CD8-positive, alpha-beta T cell (primary cell): ENCODE measurements at regions of chr4 and their contacts with region 1.

Region 1: DNA sequence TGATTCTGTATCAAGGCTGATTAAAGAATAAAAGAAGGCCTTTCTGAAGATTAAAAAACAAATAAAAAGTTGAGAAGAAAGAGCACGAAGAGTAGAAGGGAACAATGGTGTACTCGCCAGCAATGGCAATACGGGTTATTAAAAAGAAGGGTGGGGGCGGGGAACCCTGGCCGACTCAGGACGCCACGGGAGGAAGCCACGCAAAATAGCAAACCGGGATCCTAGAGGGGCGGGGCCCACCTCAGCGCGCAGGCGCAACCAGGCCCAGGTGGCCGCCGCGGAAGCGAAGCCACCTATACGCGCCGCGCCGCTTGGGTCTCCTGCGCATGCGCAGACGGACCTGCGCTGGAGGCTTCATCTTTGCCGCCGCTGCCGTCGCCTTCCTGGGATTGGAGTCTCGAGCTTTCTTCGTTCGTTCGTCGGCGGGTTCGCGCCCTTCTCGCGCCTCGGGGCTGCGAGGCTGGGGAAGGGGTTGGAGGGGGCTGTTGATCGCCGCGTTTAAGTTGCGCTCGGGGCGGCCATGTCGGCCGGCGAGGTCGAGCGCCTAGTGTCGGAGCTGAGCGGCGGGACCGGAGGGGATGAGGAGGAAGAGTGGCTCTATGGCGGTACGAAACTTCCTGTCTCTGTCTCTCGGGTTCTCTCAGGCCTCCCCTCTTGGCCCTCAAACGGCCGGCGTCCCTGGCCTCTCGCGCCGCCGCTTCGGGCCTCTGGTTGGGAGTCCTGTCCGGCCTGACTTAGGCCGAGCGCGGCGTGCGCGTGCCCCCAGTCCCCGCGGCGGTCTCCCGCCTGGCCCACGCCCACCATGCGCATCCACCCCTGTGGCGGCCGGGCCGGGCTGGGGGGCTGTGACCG is at the start of gene FIP1L1:
- DNase-seq: peak; percentile 90 to 98 (median 96)
- ATAC-seq: peak; percentile 92
- H3K4me3 ChIP-seq: peak within 1 kb of the TSS; percentile 68 to 96
- H3K4me3 Mint-ChIP-seq: peak within 1 kb of the TSS; percentile 100
- H3K27ac ChIP-seq: peak within 1 kb of the TSS; percentile 84 to 90
- H3K27ac Mint-ChIP-seq: peak within 1 kb of the TSS; percentile 99
- H3K4me1 ChIP-seq: peaks cover 26% of the 10 kb centered on the region
- H3K4me1 Mint-ChIP-seq: peaks cover 40% of the 10 kb centered on the region
- H3K27me3 ChIP-seq: peaks cover 0 to 2% of the 10 kb centered on the region in 2 experiments
- H3K27me3 Mint-ChIP-seq: peaks cover 2% of the 10 kb centered on the region
- CTCF ChIP-seq: no peak
- total RNA-seq, gene FIP1L1: 56.9 to 59.9 TPM

Region 2: DNA sequence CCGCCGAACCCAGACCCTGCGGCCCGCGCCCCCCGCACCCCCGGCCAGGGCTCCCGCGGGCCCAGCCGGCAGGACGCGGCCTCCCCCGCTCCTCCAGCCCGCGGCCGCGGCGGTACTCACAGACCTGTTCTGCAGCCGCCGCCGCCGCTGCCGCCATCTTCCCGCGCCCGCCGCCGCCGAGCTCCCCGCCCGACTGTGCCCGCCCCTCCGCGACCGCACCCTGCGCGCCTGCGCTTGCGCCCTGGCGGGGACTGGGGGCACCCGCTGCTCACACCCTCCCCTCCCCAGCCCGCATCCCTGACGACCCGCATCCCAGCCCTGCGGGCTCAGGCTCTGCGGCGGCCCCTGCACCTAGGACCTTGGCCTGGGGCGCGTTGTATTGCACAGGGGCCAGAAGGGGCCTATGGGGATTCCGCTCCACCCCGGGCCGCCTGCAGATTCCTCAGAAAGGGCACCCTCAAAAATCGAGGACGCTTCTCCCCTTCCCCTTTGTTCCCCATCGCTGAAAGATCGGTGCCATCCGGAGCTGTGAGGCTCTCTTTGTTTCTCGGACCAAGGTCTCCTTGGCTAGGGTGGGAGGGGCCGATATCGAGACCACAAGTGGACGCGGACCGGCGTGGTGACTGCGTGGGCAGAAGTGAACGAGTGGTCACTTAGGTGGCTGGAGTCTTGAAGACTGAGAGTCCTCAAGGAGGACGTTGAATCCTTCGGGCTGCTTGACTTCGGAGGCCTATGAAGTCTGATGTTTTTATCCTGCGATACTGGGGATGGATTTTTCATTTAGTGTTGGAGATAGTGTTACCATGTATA is 1339.2 kb before region 1 on chr4 and contains the start of gene SGCB:
- CTCF ChIA-PET with region 1: no interaction called
- POLR2A ChIA-PET with region 1: no interaction called
- intact Hi-C with region 1: loop called in 1 of 2 experiments (anchors 5 kb)
- DNase-seq: peak; percentile 29 to 83 (median 72)
- ATAC-seq: peak; percentile 94
- H3K4me3 ChIP-seq: peak within 1 kb of the TSS; percentile 67 to 74
- H3K4me3 Mint-ChIP-seq: peak within 1 kb of the TSS; percentile 85
- H3K27ac ChIP-seq: no peak within 1 kb of the TSS
- H3K27ac Mint-ChIP-seq: peak within 1 kb of the TSS; percentile 19
- H3K4me1 ChIP-seq: peaks cover 14% of the 10 kb centered on the region
- H3K4me1 Mint-ChIP-seq: peaks cover 26% of the 10 kb centered on the region
- H3K27me3 ChIP-seq: no peaks in the 10 kb centered on the region
- H3K27me3 Mint-ChIP-seq: peaks cover 11% of the 10 kb centered on the region
- CTCF ChIP-seq: no peak
- total RNA-seq, gene SGCB: 3.0 to 3.1 TPM

Region 3: GRCh38 chr4:52545099-52546069 is 832.2 kb before region 1 on chr4:
- CTCF ChIA-PET with region 1: no interaction called
- POLR2A ChIA-PET with region 1: no interaction called
- intact Hi-C with region 1: no loop called
- DNase-seq: peak; percentile 23 to 64 (median 55)
- ATAC-seq: peak; percentile 38
- H3K4me3 ChIP-seq: no peak overlapping the region
- H3K4me3 Mint-ChIP-seq: no peak overlapping the region
- H3K27ac ChIP-seq: no peak overlapping the region
- H3K27ac Mint-ChIP-seq: no peak overlapping the region
- H3K4me1 ChIP-seq: no peaks in the 10 kb centered on the region
- H3K4me1 Mint-ChIP-seq: no peaks in the 10 kb centered on the region
- H3K27me3 ChIP-seq: peaks cover 0 to 3% of the 10 kb centered on the region in 2 experiments
- H3K27me3 Mint-ChIP-seq: peaks cover 16% of the 10 kb centered on the region
- CTCF ChIP-seq: peak; percentile 62

Region 4: GRCh38 chr4:52712172-52712990 is 665.2 kb before region 1 on chr4:
- CTCF ChIA-PET with region 1: no interaction called
- POLR2A ChIA-PET with region 1: no interaction called
- intact Hi-C with region 1: loop called in 1 of 2 experiments (anchors 5 kb)
- DNase-seq: peak; percentile 90 to 97 (median 95)
- ATAC-seq: peak; percentile 89
- H3K4me3 ChIP-seq: peak overlapping the region; percentile 58 to 76
- H3K4me3 Mint-ChIP-seq: peak overlapping the region; percentile 92
- H3K27ac ChIP-seq: peak overlapping the region; percentile 82 to 89
- H3K27ac Mint-ChIP-seq: peak overlapping the region; percentile 96
- H3K4me1 ChIP-seq: peaks cover 29% of the 10 kb centered on the region
- H3K4me1 Mint-ChIP-seq: peaks cover 43% of the 10 kb centered on the region
- H3K27me3 ChIP-seq: no peaks in the 10 kb centered on the region
- H3K27me3 Mint-ChIP-seq: no peaks in the 10 kb centered on the region
- CTCF ChIP-seq: no peak

Region 5: DNA sequence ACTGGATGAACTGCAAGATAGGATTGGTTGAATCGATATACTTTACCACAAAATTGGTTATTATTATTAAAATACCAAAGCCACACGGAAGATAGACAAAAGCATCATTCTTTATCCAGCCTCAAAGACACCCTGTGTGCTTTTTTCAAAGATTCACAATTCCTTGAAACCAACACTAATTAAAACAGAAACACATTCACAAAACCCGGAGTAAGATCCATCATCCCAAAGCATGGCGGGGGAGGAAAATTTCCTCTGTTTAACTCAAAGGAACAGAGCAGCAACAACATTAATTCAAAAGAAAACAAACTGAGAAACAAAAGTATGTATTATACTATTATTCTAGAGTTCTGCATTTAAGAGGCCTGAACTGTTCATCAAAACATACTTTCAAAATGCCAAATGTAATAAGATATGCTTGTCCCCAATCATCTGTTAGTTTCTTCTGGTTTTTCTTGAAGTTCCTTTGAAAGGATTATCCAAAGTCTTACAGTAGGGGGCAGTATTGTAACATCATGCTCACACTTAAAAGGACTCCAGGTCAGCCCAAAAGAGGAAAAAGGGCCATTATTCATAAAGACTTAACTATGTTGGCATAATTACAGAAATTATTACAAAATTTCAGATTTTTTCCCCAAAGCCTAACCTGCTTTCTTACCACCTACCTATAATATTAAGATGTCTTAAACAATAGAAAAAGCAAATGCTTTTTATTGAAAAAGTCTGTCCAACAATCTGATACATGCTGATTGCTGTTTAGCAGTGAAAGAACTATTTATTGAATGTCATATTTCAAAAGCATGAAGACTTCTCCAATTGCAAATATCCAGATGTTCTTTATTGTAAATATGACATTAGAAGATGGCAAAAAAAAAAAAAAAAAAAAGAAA is 180.4 kb before region 1 on chr4:
- CTCF ChIA-PET with region 1: no interaction called
- POLR2A ChIA-PET with region 1: no interaction called
- intact Hi-C with region 1: loop called in 1 of 2 experiments (anchors 5 kb)
- DNase-seq: peak in 2 of 9 experiments; percentile 62 to 69
- ATAC-seq: no peak
- H3K4me3 ChIP-seq: no peak overlapping the region
- H3K4me3 Mint-ChIP-seq: no peak overlapping the region
- H3K27ac ChIP-seq: no peak overlapping the region
- H3K27ac Mint-ChIP-seq: no peak overlapping the region
- H3K4me1 ChIP-seq: no peaks in the 10 kb centered on the region
- H3K4me1 Mint-ChIP-seq: no peaks in the 10 kb centered on the region
- H3K27me3 ChIP-seq: no peaks in the 10 kb centered on the region
- H3K27me3 Mint-ChIP-seq: no peaks in the 10 kb centered on the region
- CTCF ChIP-seq: peak; percentile 79

Region 6: DNA sequence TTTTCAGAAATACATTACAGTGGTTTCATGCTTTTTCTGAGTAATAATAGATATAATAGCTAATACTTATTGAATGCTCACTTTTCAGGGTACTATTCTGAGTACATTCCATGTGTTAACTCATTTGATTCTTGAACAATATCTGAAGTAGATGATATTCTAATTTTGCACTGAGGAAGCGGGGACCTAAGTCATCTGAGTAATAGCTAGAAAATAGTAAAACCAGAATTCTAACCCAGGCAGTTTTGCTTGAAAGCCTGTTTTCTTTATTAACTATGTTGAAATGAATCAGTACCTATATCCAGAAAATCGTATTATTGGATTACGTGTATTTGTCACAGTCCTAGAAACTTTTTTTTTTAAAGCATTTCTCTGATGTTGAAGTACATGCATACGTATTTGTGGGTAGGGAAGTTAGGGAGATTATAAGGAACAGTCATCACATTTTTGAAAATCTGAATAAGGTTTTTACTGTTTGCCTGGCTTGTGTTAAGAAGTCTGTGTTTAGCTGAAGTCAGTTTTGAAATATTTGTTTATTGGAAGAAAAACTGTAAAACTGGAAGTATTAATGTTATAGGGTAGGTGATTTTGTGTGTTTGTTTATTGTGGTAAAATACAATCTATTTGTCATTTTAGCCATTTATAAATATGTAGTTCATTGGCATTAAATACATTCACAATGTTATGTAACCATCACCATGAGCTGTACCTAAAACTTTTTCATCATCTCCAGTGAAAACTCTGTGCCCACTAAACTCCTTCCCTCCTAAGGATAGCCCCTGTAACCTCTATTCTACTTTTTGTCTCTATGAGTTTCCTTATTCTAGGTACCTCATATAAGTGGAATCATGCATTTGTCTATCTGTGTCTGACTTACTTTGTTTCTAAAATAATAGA is 55.2 kb after region 1 on chr4:
- CTCF ChIA-PET with region 1: no interaction called
- POLR2A ChIA-PET with region 1: no interaction called
- intact Hi-C with region 1: loop called in 1 of 2 experiments (anchors 5 kb)
- DNase-seq: no peak
- ATAC-seq: no peak
- H3K4me3 ChIP-seq: no peak overlapping the region
- H3K4me3 Mint-ChIP-seq: no peak overlapping the region
- H3K27ac ChIP-seq: no peak overlapping the region
- H3K27ac Mint-ChIP-seq: no peak overlapping the region
- H3K4me1 ChIP-seq: peaks cover 8% of the 10 kb centered on the region
- H3K4me1 Mint-ChIP-seq: peaks cover 26% of the 10 kb centered on the region
- H3K27me3 ChIP-seq: no peaks in the 10 kb centered on the region
- H3K27me3 Mint-ChIP-seq: no peaks in the 10 kb centered on the region
- CTCF ChIP-seq: no peak